PC-9 (cell line): ENCODE measurements at regions of chr9 and their contacts with region 1.

Region 1: DNA sequence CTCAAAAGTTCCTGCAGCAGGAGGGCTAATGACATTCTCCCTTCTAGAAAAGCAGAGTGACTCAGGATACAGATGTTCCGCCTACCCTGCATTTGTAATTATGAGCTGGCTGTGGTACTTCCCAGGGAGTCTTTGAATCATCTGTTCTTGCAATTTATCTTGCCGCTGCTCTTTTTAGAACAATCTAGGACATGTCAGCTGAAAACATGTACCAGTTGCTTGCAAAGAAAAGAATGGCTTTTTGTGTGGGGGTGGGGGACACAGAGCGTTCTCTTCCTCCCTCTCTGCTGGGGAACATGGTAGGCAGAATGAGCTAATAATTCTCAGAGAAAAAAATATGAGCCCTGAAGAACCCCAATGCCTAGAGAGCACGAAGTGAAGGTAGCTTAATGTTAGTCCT is 51.7 kb upstream of the TUT7 start:
- DNase-seq: peak; percentile 18 to 75
- H3K4me3 ChIP-seq: peak overlapping the region; percentile 29; the same call in 1 of the 2 replicates
- H3K27ac ChIP-seq: peak overlapping the region; percentile 81
- H3K4me1 ChIP-seq: peaks cover 29% of the 10 kb centered on the region
- H3K27me3 ChIP-seq: no peaks in the 10 kb centered on the region
- CTCF ChIP-seq: no peak

Region 2: GRCh38 chr9:86202338-86202882 is 203.5 kb before region 1 on chr9:
- CTCF ChIA-PET with region 1: no interaction called
- POLR2A ChIA-PET with region 1: no interaction called
- intact Hi-C with region 1: loop called (anchors 5 kb)
- DNase-seq: peak; percentile 18 to 52
- H3K4me3 ChIP-seq: no peak overlapping the region
- H3K27ac ChIP-seq: no peak overlapping the region
- H3K4me1 ChIP-seq: no peaks in the 10 kb centered on the region
- H3K27me3 ChIP-seq: no peaks in the 10 kb centered on the region
- CTCF ChIP-seq: peak; percentile 86

Region 3: GRCh38 chr9:86354011-86354817 is 51.7 kb before region 1 on chr9 and contains the start of gene TUT7:
- CTCF ChIA-PET with region 1: no interaction called
- POLR2A ChIA-PET with region 1: no interaction called
- intact Hi-C with region 1: loop called (anchors 1 kb)
- DNase-seq: peak; percentile 85 to 99
- H3K4me3 ChIP-seq: peak within 1 kb of the TSS; percentile 64
- H3K27ac ChIP-seq: peak within 1 kb of the TSS; percentile 86
- H3K4me1 ChIP-seq: peaks cover 55% of the 10 kb centered on the region
- H3K27me3 ChIP-seq: no peaks in the 10 kb centered on the region
- CTCF ChIP-seq: no peak
- total RNA-seq, gene TUT7: 30.1 and 36.1 TPM in 2 replicates

Region 4: GRCh38 chr9:86368871-86369521 is 36.9 kb before region 1 on chr9:
- CTCF ChIA-PET with region 1: no interaction called
- POLR2A ChIA-PET with region 1: no interaction called
- intact Hi-C with region 1: no loop called
- DNase-seq: peak in 1 of 2 experiments; percentile 78
- H3K4me3 ChIP-seq: no peak overlapping the region
- H3K27ac ChIP-seq: peak overlapping the region; percentile 63
- H3K4me1 ChIP-seq: peaks cover 7% of the 10 kb centered on the region; the same call in 1 of the 2 replicates
- H3K27me3 ChIP-seq: no peaks in the 10 kb centered on the region
- CTCF ChIP-seq: no peak

Region 5: DNA sequence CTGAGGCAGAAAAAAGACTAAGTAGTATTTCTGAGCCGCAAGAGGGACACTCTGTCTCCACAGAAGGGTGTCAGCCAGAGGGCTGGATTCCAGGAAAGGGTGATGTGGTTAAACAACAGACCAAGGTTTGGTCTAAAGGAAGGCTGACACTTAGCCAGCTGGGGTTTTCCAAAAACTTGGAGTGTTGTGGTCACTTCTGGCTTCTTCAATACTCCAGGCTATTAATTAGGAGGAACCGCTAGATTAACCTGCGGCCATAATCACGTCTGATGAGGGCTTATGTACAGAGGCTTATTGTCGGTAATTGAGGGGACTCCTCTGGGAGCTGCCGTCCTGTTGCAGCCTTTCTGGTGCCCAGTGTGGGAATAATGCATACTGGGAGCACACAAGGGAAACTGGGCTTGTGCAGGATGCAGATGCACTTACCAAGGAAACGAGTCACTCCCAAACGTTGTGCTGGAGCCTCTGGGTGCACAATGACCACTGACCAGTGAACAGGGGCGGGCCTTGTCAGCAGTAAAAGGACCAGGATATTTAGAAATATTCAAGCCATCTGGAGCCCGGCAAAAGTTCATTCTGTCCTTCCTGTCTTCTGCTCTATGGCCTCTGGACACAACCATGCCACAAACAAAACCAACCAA is 18.4 kb after region 1 on chr9:
- CTCF ChIA-PET with region 1: no interaction called
- POLR2A ChIA-PET with region 1: no interaction called
- intact Hi-C with region 1: no loop called
- DNase-seq: no peak
- H3K4me3 ChIP-seq: no peak overlapping the region
- H3K27ac ChIP-seq: no peak overlapping the region
- H3K4me1 ChIP-seq: no peaks in the 10 kb centered on the region
- H3K27me3 ChIP-seq: no peaks in the 10 kb centered on the region
- CTCF ChIP-seq: no peak

Region 6: DNA sequence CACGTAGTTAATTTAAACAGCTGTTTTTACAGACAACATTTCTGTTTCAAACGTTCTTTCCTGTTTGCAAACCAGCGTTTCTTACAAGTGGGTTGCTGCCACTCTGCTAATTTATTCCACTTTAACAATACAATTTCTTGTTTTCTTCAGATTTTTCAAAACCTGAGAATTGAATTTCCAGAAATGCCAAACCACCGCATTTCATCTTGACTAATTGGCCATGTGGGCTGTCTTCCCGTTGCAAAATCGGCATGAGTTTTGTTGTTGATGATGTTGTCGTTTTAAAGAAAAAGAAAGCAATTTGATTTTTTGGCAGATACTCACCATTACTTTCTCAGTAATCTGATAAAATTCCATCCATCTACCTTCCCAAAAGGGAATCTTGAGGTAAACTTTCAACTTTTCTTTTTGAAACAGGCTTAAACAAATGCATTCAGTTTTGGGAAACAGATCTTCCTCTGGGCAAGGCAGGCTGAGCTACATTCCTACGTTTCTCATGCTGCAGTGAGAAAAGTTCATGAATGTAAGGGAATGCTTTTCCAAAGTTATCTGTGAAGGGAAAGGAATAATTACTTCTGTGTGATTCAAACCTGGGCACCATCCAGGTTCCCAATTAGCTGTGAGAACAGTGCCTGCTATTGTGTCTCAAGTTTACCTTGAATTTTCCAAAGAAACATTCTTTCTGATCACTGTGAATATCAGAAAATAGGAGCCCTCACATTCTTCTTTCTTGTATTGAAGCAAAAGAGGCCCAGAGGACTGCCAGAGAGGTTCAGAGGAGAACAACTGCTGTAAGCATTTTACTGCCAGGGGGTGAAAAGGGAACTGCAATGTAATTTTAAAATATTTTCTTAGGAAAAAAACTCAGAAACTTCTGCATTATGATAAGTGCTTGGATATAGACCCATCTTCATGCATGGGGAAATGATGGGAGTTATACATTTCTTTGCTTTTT is 49.0 kb after region 1 on chr9:
- CTCF ChIA-PET with region 1: no interaction called
- POLR2A ChIA-PET with region 1: no interaction called
- intact Hi-C with region 1: no loop called
- DNase-seq: no peak
- H3K4me3 ChIP-seq: no peak overlapping the region; the same call in 1 of the 2 replicates
- H3K27ac ChIP-seq: no peak overlapping the region
- H3K4me1 ChIP-seq: 0 out of 2 replicates have a peak, but pooled peaks cover 8% of the 10 kb centered on the region
- H3K27me3 ChIP-seq: no peaks in the 10 kb centered on the region
- CTCF ChIP-seq: no peak